HepG2 (cell line): ENCODE measurements at regions of chr14 and their contacts with region 1.

Region 1: DNA sequence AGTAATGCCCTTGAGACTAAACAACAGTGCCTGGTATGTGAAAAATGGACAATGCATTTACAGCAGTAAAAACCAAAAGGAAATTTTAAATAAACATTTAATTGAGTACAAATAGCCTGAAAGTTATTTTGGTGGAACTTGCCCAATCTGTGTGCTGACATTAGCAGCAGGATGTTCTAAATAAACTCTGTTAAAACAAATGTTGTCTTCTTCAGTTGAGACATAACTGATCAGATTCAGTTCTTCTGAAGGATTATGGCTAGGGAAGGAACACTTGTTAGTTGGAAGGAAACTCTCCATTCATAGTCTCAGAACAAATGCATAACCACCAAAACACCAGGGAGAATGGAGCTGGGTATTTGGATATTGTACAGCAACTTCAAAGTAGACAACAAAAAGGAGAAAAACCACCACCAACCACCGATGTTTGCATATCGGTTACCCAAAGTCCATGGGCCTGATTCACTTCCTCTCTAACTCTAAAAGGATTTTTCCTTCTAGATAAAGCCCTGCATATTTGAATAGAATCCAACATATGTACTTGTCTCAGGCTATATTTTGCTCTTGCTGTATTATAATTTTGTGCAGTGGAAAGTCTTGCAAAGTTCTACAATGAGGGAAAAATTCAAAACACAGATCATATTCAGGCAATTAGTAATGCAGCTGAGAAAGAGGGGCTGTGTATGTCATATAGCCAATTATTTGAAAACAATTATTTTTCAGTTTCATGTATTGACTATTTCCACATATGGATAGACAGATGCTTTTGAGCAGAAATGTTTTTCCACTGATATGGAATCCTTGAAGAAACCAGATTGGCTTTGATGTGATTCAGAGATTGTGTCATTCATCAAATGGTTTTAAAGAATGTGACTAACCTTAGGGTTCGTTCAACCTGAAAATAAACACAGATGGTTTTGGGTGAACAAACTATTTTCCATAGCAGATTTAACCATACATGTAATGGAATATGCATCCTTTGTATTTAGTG is 152.2 kb upstream of the BMP4 start:
- DNase-seq: peak; percentile 96
- ATAC-seq: peak; percentile 94
- H3K4me3 ChIP-seq: no peak overlapping the region; a peak in 1 of 6 replicates
- H3K27ac ChIP-seq: peak overlapping the region; percentile 83
- H3K4me1 ChIP-seq: peaks cover 84% of the 10 kb centered on the region
- H3K27me3 ChIP-seq: no peaks in the 10 kb centered on the region
- CTCF ChIP-seq: no peak
- EP300 ChIP-seq: peak in 1 of 2 experiments; percentile 97; a peak in 3 of 4 replicates
- POLR2A ChIP-seq: no peak
- RAD21 ChIP-seq: 0 out of 2 replicates have a peak, but pooled peaks have one; percentile 27

Region 2: DNA sequence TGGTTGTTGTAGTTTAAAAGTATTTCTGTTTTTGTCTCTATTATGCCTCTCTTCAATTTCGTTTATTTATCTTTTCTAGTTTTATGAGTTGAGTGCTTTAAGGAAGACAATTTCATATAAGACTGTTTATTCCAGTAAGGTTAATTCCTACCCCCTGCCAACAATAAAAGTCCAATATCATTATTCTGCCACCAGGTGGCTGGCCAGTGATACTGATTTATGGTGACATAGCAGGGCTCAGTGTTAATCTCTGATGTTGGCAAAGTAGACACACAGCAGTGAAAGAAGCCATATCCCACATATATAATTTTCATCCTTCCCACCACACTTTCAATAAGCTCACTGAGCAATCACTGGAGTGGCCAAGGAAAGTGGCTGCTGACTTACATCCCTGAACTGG is 83.1 kb before region 1 on chr14:
- CTCF ChIA-PET with region 1: no interaction called
- POLR2A ChIA-PET with region 1: no interaction called
- in situ Hi-C with region 1: no loop called
- intact Hi-C with region 1: loop called (anchors 1 kb)
- DNase-seq: peak; percentile 36
- ATAC-seq: peak; percentile 52; the same call in 1 of the 3 replicates
- H3K4me3 ChIP-seq: no peak overlapping the region
- H3K27ac ChIP-seq: no peak overlapping the region
- H3K4me1 ChIP-seq: peaks cover 13% of the 10 kb centered on the region
- H3K27me3 ChIP-seq: no peaks in the 10 kb centered on the region
- CTCF ChIP-seq: peak; percentile 56
- EP300 ChIP-seq: no peak
- POLR2A ChIP-seq: no peak
- RAD21 ChIP-seq: 0 out of 2 replicates have a peak, but pooled peaks have one; percentile 29

Region 3: GRCh38 chr14:54048311-54048710 is 60.5 kb before region 1 on chr14:
- CTCF ChIA-PET with region 1: no interaction called
- POLR2A ChIA-PET with region 1: interaction called, 5 read pairs
- in situ Hi-C with region 1: no loop called
- intact Hi-C with region 1: loop called (anchors 2 kb)
- DNase-seq: peak; percentile 15
- ATAC-seq: peak; percentile 63
- H3K4me3 ChIP-seq: no peak overlapping the region; a peak in 1 of 6 replicates
- H3K27ac ChIP-seq: peak overlapping the region; percentile 79
- H3K4me1 ChIP-seq: peaks cover 63% of the 10 kb centered on the region
- H3K27me3 ChIP-seq: no peaks in the 10 kb centered on the region
- CTCF ChIP-seq: no peak
- EP300 ChIP-seq: no peak
- POLR2A ChIP-seq: no peak
- RAD21 ChIP-seq: no peak

Region 4: GRCh38 chr14:54147282-54147681 is 38.5 kb after region 1 on chr14:
- CTCF ChIA-PET with region 1: no interaction called
- POLR2A ChIA-PET with region 1: no interaction called
- in situ Hi-C with region 1: no loop called
- intact Hi-C with region 1: no loop called
- DNase-seq: no peak
- ATAC-seq: no peak
- H3K4me3 ChIP-seq: no peak overlapping the region
- H3K27ac ChIP-seq: no peak overlapping the region
- H3K4me1 ChIP-seq: peaks cover 18% of the 10 kb centered on the region
- H3K27me3 ChIP-seq: no peaks in the 10 kb centered on the region
- CTCF ChIP-seq: no peak
- EP300 ChIP-seq: no peak
- POLR2A ChIP-seq: no peak
- RAD21 ChIP-seq: no peak

Region 5: DNA sequence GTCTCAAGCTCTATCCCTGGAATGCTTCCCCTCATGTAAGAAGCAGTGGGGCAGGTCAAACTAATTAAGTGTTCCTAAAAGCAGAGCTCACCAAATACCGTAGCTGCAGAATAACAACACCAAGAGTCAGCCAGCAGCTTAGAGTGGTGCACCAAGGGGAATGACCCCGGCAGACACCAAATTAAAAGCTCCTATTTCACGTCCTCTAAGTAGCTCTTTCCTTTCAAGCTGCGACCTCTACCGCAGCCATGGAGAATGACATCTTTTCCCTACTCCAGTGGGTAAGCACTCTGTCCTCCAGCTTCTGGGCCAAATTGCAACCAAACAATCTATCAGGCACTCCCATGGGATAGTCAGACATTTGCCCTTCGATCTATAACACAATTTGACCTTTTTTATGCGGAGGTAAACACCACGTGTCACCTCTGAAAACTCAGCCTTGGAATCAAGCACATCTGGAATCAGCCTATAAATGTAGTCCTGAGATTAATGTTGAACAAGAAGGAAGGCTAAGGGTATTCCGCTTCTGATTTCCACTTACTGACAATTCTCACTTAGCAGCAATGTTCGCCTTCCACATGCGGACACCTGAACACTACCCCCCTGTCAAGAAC is 220.4 kb after region 1 on chr14:
- CTCF ChIA-PET with region 1: no interaction called
- POLR2A ChIA-PET with region 1: no interaction called
- in situ Hi-C with region 1: no loop called
- intact Hi-C with region 1: loop called (anchors 2 kb)
- DNase-seq: peak; percentile 65
- ATAC-seq: peak; percentile 94
- H3K4me3 ChIP-seq: no peak overlapping the region
- H3K27ac ChIP-seq: no peak overlapping the region
- H3K4me1 ChIP-seq: peaks cover 19% of the 10 kb centered on the region
- H3K27me3 ChIP-seq: no peaks in the 10 kb centered on the region
- CTCF ChIP-seq: peak; percentile 93
- EP300 ChIP-seq: no peak
- POLR2A ChIP-seq: no peak
- RAD21 ChIP-seq: peak; percentile 86

Region 6: DNA sequence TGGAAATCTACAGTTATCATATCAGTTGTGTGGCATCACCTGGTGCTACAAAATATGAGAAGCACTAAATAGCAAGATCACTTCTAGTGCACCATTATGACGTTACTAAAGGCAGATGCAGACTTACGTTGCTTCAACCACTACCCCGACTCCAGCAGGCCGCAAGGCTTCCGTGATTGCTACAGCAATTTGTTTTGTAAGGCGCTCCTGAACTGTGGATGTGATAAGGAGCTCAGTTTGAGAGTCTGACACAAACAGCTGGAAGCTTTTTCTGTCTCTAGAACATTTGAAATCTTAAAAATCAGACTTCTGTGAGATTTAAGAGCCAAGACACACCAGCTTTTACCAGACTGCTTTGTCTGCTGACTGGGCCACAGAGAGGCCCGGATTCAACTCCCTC is 736.9 kb after region 1 on chr14:
- CTCF ChIA-PET with region 1: no interaction called
- POLR2A ChIA-PET with region 1: no interaction called
- in situ Hi-C with region 1: no loop called
- intact Hi-C with region 1: no loop called
- DNase-seq: no peak
- ATAC-seq: no peak
- H3K4me3 ChIP-seq: no peak overlapping the region
- H3K27ac ChIP-seq: peak overlapping the region; percentile 39
- H3K4me1 ChIP-seq: peaks cover 23% of the 10 kb centered on the region
- H3K27me3 ChIP-seq: no peaks in the 10 kb centered on the region
- CTCF ChIP-seq: no peak
- EP300 ChIP-seq: no peak
- POLR2A ChIP-seq: no peak
- RAD21 ChIP-seq: no peak

Region 7: DNA sequence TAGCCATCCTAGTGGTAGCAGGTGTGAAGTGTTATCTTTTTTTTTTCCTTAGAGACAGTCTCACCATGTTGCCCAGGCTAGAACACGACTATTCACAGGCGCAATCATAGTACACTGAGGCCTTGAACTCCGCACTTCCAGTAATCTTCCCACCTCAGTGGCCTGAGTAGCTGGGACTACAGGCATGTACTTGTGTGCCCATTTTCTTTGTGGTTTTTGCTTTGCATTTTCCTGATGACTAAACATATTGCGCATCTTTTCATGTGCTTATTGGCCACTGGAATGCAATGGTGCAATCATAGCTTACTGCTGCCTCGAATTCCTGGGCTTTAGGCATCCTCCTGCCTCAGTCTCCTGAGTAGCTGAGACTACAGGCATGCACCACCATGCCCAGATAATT is 827.2 kb after region 1 on chr14:
- CTCF ChIA-PET with region 1: no interaction called
- POLR2A ChIA-PET with region 1: no interaction called
- in situ Hi-C with region 1: no loop called
- intact Hi-C with region 1: loop called (anchors 5 kb)
- DNase-seq: peak; percentile 5
- ATAC-seq: no peak
- H3K4me3 ChIP-seq: no peak overlapping the region
- H3K27ac ChIP-seq: no peak overlapping the region
- H3K4me1 ChIP-seq: peaks cover 20% of the 10 kb centered on the region
- H3K27me3 ChIP-seq: no peaks in the 10 kb centered on the region
- CTCF ChIP-seq: no peak
- EP300 ChIP-seq: no peak
- POLR2A ChIP-seq: no peak
- RAD21 ChIP-seq: no peak